Calu3 (cell line): ENCODE measurements at regions of chr3 and their contacts with region 1.

Region 1: GRCh38 chr3:167882067-167882667 is 146.6 kb downstream of the SERPINI1 start:
- DNase-seq: no peak
- H3K4me3 Mint-ChIP-seq: no peak overlapping the region
- H3K27ac Mint-ChIP-seq: no peak overlapping the region
- H3K4me1 Mint-ChIP-seq: peaks cover 19% of the 10 kb centered on the region
- H3K27me3 Mint-ChIP-seq: peaks cover 22% of the 10 kb centered on the region
- CTCF ChIP-seq: peak; percentile 73

Region 2: DNA sequence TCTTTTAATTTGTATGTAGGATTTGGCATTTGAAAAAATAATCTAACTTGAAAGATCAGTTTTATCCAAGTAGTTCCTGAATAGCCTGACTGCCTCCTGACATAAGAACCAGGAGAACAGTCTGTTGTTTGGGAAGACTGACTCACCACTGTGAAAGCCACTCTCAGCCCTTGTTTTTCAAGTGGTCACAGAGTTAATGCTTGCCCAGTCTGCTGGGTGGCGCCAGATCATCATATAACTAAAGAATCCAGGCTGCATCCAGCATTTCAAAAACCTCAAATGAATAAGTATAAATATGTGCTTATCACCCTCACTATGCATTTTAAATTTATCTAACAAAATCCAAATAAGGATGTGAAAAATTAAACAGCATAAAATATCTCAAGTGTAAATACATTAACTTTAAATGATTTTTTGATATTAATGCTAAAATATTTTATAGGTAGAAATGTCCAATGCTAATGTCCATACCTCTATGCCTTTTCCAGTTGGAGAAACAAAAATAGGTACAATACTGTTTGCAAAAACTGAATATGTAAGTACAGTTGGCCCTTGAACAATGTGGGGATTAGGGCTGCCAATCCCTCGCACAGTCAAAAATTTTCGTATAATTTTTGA is 475.2 kb before region 1 on chr3:
- CTCF ChIA-PET with region 1: no interaction called
- intact Hi-C with region 1: loop called (anchors 2 kb)
- DNase-seq: peak; percentile 74
- H3K4me3 Mint-ChIP-seq: no peak overlapping the region
- H3K27ac Mint-ChIP-seq: no peak overlapping the region
- H3K4me1 Mint-ChIP-seq: peaks cover 7% of the 10 kb centered on the region
- H3K27me3 Mint-ChIP-seq: no peaks in the 10 kb centered on the region
- CTCF ChIP-seq: peak; percentile 49

Region 3: GRCh38 chr3:167684388-167684993 is 197.7 kb before region 1 on chr3:
- CTCF ChIA-PET with region 1: no interaction called
- intact Hi-C with region 1: loop called (anchors 5 kb)
- DNase-seq: peak; percentile 84
- H3K4me3 Mint-ChIP-seq: no peak overlapping the region
- H3K27ac Mint-ChIP-seq: no peak overlapping the region
- H3K4me1 Mint-ChIP-seq: peaks cover 6% of the 10 kb centered on the region
- H3K27me3 Mint-ChIP-seq: no peaks in the 10 kb centered on the region
- CTCF ChIP-seq: peak; percentile 90

Region 4: DNA sequence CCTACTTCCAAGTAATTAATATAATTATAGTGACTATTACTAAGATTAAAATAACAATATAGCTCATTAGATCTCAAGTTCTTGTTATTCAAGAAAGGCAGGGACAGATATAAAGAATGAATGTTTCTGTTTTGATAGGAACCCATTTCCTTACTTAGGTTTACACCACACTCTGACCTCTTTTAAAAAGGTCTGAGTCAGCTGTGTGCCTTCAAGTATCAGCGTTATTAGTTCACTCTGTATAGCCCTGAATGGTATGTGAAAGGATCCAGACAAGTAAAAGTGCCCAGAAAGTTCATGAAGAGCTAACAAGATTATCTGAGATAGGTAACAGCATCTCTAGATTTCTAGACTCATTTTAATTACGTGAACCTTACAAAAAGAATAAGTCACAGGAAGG is 176.3 kb before region 1 on chr3:
- CTCF ChIA-PET with region 1: no interaction called
- intact Hi-C with region 1: no loop called
- DNase-seq: no peak
- H3K4me3 Mint-ChIP-seq: no peak overlapping the region
- H3K27ac Mint-ChIP-seq: no peak overlapping the region
- H3K4me1 Mint-ChIP-seq: no peaks in the 10 kb centered on the region
- H3K27me3 Mint-ChIP-seq: no peaks in the 10 kb centered on the region
- CTCF ChIP-seq: no peak

Region 5: GRCh38 chr3:167740961-167741587 is 141.1 kb before region 1 on chr3:
- CTCF ChIA-PET with region 1: interaction called, 13 read pairs
- intact Hi-C with region 1: loop called (anchors 2 kb)
- DNase-seq: peak; percentile 64
- H3K4me3 Mint-ChIP-seq: no peak overlapping the region
- H3K27ac Mint-ChIP-seq: no peak overlapping the region
- H3K4me1 Mint-ChIP-seq: peaks cover 11% of the 10 kb centered on the region
- H3K27me3 Mint-ChIP-seq: no peaks in the 10 kb centered on the region
- CTCF ChIP-seq: peak; percentile 59

Region 6: GRCh38 chr3:167895684-167896083 is 13.5 kb after region 1 on chr3:
- CTCF ChIA-PET with region 1: no interaction called
- intact Hi-C with region 1: no loop called
- DNase-seq: no peak
- H3K4me3 Mint-ChIP-seq: no peak overlapping the region
- H3K27ac Mint-ChIP-seq: no peak overlapping the region
- H3K4me1 Mint-ChIP-seq: no peaks in the 10 kb centered on the region
- H3K27me3 Mint-ChIP-seq: peaks cover 6% of the 10 kb centered on the region
- CTCF ChIP-seq: no peak

Region 7: DNA sequence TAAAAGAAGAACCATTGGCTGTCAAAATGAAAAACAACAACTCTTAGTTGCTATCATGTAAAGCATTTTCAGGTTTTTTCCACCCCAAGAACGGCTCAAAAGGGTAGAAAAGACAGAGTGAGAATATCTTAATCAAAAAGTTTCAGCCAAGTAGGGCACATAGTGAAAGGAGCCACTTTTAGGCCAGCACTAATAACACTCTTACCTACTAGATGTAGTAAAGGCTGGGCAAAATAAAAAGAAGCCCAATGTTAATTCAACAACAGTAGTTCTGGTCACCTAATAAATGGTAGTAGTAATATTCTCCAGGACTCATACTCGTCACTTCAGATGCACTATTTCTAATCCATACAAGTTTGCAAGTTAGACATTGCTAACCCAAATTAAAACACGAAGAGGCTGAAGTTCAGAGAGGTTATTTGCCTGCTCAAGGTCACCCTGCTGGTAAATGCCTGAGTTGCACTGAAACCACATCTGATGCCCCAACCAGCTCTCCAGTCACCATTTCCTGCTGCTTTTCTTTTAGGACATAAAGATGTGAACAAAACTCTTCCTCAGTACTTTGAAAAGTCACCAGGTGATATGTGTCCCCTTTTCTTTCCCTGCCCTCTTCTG is 206.0 kb after region 1 on chr3:
- CTCF ChIA-PET with region 1: no interaction called
- intact Hi-C with region 1: no loop called
- DNase-seq: peak; percentile 41
- H3K4me3 Mint-ChIP-seq: no peak overlapping the region
- H3K27ac Mint-ChIP-seq: no peak overlapping the region
- H3K4me1 Mint-ChIP-seq: peaks cover 52% of the 10 kb centered on the region
- H3K27me3 Mint-ChIP-seq: no peaks in the 10 kb centered on the region
- CTCF ChIP-seq: peak; percentile 74